GM12878 (cell line): ENCODE measurements at regions of chr7 and their contacts with region 1.

Region 1: DNA sequence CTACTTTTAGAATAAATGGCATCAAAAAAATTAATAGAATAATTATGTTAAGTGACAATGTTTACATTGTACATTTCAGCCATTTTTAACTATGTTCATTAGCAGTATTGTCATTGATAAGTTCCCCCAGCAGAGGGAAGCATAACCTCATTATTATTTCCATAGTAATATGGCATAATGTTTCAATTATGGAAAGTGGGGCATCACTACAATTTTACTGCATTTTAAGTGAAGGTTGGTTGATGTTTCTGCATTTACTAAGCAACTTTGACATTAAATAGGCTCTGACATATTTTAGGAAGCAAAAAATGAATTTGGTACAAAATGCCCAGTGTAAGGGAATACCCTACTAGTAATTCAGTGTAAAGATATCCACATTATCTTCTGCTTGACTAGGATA is 218.3 kb downstream of the SEMA3A start:
- DNase-seq: no peak
- ATAC-seq: peak; percentile 86
- H3K4me3 ChIP-seq: no peak overlapping the region
- H3K27ac ChIP-seq: no peak overlapping the region
- H3K4me1 ChIP-seq: no peaks in the 10 kb centered on the region
- H3K27me3 ChIP-seq: no peaks in the 10 kb centered on the region
- CTCF ChIP-seq: peak; percentile 23 to 67 (median 40); a peak in 4 of 6 replicates
- EP300 ChIP-seq: no peak
- POLR2A ChIP-seq: no peak
- RAD21 ChIP-seq: peak; percentile 83

Region 2: DNA sequence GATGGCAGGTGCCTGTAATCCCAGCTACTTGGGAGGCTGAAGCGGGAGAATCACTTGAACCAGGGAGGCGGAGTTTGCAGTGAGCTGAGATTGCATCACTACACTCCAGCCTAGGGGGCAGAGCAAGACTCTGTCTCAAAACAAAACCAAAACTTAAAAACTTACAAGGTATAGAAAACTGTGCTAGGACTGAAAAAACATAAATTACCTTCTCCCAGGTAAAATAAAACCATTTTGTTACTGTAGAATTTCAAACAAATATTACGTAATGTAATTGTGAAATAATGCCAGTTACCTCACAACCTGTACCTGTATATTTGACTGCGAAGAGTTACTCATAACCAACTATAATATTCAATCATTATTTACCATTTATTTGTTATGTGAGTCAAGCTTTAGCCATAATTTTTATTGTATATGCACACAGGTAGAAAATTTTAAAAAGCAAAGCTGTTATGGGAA is 37.4 kb after region 1 on chr7:
- CTCF ChIA-PET with region 1: no interaction called
- POLR2A ChIA-PET with region 1: no interaction called
- RAD21 ChIA-PET with region 1: no interaction called
- SMC1A ChIA-PET with region 1: no interaction called
- in situ Hi-C with region 1: no loop called
- intact Hi-C with region 1: no loop called
- DNase-seq: no peak
- ATAC-seq: peak; percentile 59
- H3K4me3 ChIP-seq: no peak overlapping the region
- H3K27ac ChIP-seq: no peak overlapping the region
- H3K4me1 ChIP-seq: no peaks in the 10 kb centered on the region
- H3K27me3 ChIP-seq: no peaks in the 10 kb centered on the region
- CTCF ChIP-seq: no peak
- EP300 ChIP-seq: no peak
- POLR2A ChIP-seq: no peak
- RAD21 ChIP-seq: no peak

Region 3: GRCh38 chr7:84188786-84189405 is 212.6 kb after region 1 on chr7:
- CTCF ChIA-PET with region 1: interaction called, 17 read pairs
- POLR2A ChIA-PET with region 1: no interaction called
- RAD21 ChIA-PET with region 1: interaction called, 4 read pairs
- SMC1A ChIA-PET with region 1: interaction called, 5 read pairs
- in situ Hi-C with region 1: no loop called
- intact Hi-C with region 1: loop called (anchors 2 kb)
- DNase-seq: no peak
- ATAC-seq: peak; percentile 46
- H3K4me3 ChIP-seq: no peak overlapping the region
- H3K27ac ChIP-seq: no peak overlapping the region
- H3K4me1 ChIP-seq: no peaks in the 10 kb centered on the region
- H3K27me3 ChIP-seq: no peaks in the 10 kb centered on the region
- CTCF ChIP-seq: peak in 1 of 3 experiments; percentile 19; a peak in 2 of 6 replicates
- EP300 ChIP-seq: no peak
- POLR2A ChIP-seq: no peak
- RAD21 ChIP-seq: peak; percentile 45; the same call in 1 of the 2 replicates

Region 4: DNA sequence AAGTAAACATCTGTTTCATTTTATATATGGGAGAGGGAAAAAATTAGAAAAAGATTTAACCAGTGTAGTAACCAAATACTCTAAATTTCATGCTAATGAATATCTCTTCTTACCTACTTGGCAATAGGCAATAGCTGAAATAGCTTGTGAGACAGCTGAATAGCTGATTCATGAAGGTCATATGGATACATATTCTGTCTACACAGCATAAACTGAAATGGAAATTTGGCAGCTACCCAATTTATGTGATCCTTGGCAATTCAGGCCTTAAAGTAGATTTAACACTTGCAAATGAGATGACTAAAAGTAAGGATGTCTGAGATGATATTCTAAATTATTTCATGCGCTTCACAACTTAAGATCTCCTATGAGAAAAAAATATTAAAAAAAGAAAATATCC is 479.5 kb after region 1 on chr7:
- CTCF ChIA-PET with region 1: interaction called, 5 read pairs
- POLR2A ChIA-PET with region 1: no interaction called
- RAD21 ChIA-PET with region 1: interaction called, 6 read pairs
- SMC1A ChIA-PET with region 1: interaction called, 5 read pairs
- in situ Hi-C with region 1: no loop called
- intact Hi-C with region 1: loop called (anchors 2 kb)
- DNase-seq: no peak
- ATAC-seq: no peak
- H3K4me3 ChIP-seq: no peak overlapping the region
- H3K27ac ChIP-seq: no peak overlapping the region
- H3K4me1 ChIP-seq: no peaks in the 10 kb centered on the region
- H3K27me3 ChIP-seq: no peaks in the 10 kb centered on the region
- CTCF ChIP-seq: no peak
- EP300 ChIP-seq: no peak
- POLR2A ChIP-seq: no peak
- RAD21 ChIP-seq: no peak

Region 5: DNA sequence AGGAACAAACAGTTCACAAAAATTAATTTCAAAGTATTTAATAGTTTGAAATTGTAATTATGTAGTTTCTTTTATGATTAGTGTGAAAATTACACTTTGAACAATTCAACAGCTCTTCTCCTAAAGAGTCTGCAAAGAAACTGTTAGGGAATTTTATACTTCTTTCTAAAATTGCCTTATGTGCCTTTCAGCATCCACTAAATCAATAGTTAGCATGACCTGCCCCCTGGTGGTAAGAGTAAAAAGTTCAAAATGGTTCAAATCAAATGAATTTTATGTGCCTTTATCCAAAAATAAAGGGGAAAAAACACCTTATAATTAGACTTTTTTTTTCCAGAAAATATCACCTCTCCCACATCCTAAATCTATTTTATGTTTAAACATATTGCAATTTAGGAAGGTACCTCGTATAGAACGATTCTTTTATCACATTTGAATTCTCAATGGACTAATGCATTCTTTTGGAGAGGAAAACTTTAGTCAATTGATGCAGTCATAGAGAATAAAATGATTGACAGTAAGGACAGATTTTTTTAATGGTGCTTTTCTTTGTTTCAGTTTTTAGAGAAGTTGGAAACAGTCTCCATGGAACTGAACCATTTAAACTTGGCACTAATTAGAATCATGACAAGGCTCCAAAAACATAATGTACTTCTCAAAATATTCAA is 1046.9 kb after region 1 on chr7:
- CTCF ChIA-PET with region 1: interaction called, 21 read pairs
- POLR2A ChIA-PET with region 1: no interaction called
- RAD21 ChIA-PET with region 1: interaction called, 8 read pairs
- SMC1A ChIA-PET with region 1: interaction called, 15 read pairs
- in situ Hi-C with region 1: loop called (anchors 5 kb)
- intact Hi-C with region 1: loop called (anchors 1 kb)
- DNase-seq: no peak
- ATAC-seq: 0 out of 3 replicates have a peak, but pooled peaks have one; percentile 42
- H3K4me3 ChIP-seq: no peak overlapping the region
- H3K27ac ChIP-seq: no peak overlapping the region
- H3K4me1 ChIP-seq: no peaks in the 10 kb centered on the region; the same call in 1 of the 2 replicates
- H3K27me3 ChIP-seq: no peaks in the 10 kb centered on the region
- CTCF ChIP-seq: peak; percentile 42 to 62 (median 52); a peak in 4 of 6 replicates
- EP300 ChIP-seq: no peak
- POLR2A ChIP-seq: no peak
- RAD21 ChIP-seq: peak; percentile 83

Region 6: GRCh38 chr7:85554236-85555178 is 1578.2 kb after region 1 on chr7:
- CTCF ChIA-PET with region 1: no interaction called
- POLR2A ChIA-PET with region 1: no interaction called
- RAD21 ChIA-PET with region 1: no interaction called
- SMC1A ChIA-PET with region 1: no interaction called
- in situ Hi-C with region 1: loop called (anchors 25 kb)
- intact Hi-C with region 1: loop called (anchors 10 kb)
- DNase-seq: no peak
- ATAC-seq: peak; percentile 74
- H3K4me3 ChIP-seq: no peak overlapping the region
- H3K27ac ChIP-seq: no peak overlapping the region
- H3K4me1 ChIP-seq: no peaks in the 10 kb centered on the region
- H3K27me3 ChIP-seq: no peaks in the 10 kb centered on the region
- CTCF ChIP-seq: peak; percentile 48 to 66 (median 66); a peak in 5 of 6 replicates
- EP300 ChIP-seq: no peak
- POLR2A ChIP-seq: no peak
- RAD21 ChIP-seq: peak; percentile 69